ENCODE measurements at regions of chr16 and their contacts with region 1.

Region 1: GRCh38 chr16:11437069-11437468 is 91.8 kb downstream of the RMI2 start:
- DNase-seq: no peak
- H3K4me3 ChIP-seq: no peak overlapping the region
- H3K27ac ChIP-seq: no peak overlapping the region
- H3K4me1 ChIP-seq: peaks cover 0 to 7% (median 0%) of the 10 kb centered on the region in 4 experiments
- H3K27me3 ChIP-seq: no peaks in the 10 kb centered on the region

Region 2: GRCh38 chr16:11297492-11298142 is 139.5 kb before region 1 on chr16:
- CTCF ChIA-PET with region 1: no interaction called
- POLR2A ChIA-PET with region 1: no interaction called
- DNase-seq: peak; percentile 96 to 99 (median 98)
- H3K4me3 ChIP-seq: peak overlapping the region in 4 of 7 experiments; percentile 8 to 49 (median 24)
- H3K27ac ChIP-seq: no peak overlapping the region
- H3K4me1 ChIP-seq: peaks cover 5 to 36% (median 30%) of the 10 kb centered on the region in 4 experiments
- H3K27me3 ChIP-seq: no peaks in the 10 kb centered on the region

Region 3: GRCh38 chr16:11423315-11424117 is 13.6 kb before region 1 on chr16:
- CTCF ChIA-PET with region 1: interaction called, 22 read pairs
- POLR2A ChIA-PET with region 1: no interaction called
- DNase-seq: peak; percentile 29 to 82 (median 78)
- H3K4me3 ChIP-seq: peak overlapping the region in 2 of 7 experiments; percentile 8 to 23
- H3K27ac ChIP-seq: peak overlapping the region in 1 of 2 experiments; percentile 30
- H3K4me1 ChIP-seq: peaks cover 0 to 56% (median 34%) of the 10 kb centered on the region in 4 experiments
- H3K27me3 ChIP-seq: no peaks in the 10 kb centered on the region

Measured in common myeloid progenitor, CD34-positive (primary cell).